BJ (cell line): ENCODE measurements at regions of chr1 and their contacts with region 1.

Region 1: GRCh38 chr1:223087291-223088255 is 55.5 kb downstream of the TLR5 start:
- DNase-seq: no peak
- H3K4me3 ChIP-seq: no peak overlapping the region
- H3K27me3 ChIP-seq: peaks cover 8% of the 10 kb centered on the region
- CTCF ChIP-seq: no peak

Region 2: DNA sequence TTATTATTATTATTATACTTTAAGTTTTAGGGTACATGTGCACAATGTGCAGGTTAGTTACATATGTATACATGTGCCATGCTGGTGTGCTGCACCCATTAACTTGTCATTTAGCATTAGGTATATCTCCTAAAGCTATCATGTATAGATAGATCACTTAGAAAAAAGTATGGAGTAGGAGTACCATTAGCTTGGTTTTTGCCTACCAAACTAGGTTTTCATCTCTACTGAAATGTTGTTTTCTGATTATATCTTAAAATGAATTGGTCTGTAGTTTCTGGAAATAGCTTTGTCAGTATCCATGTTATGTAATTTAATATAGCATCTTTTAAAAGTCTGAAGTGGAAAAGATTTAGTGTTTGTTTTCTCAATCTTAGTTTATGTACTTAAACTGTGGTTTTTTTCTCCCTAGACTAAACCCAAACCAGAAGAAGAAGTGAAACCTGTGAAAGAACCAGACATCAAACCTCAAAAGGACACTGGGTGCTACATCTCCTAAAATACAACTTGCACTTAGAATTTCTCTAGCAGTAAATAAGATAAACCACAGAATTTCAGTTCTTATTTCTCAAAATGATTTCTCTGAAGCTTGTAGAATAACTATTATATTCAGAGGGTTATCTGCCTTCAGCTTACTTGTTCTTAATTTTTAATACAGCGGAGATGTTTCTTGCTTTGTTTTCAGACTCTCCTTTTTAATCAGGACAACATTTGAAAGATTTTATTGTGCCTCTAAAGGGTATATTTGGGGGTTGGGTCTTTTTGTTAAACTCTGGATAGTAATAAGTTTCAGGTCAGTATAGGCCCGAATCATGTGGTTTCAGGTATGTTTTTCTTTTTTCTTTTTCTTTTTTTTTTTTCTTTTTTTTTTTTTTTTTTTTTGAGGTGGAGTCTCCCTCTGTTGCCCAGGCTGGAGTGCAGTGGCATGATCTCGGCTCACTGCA is 355.1 kb before region 1 on chr1:
- CTCF ChIA-PET with region 1: interaction called, 12 read pairs
- POLR2A ChIA-PET with region 1: no interaction called
- DNase-seq: no peak
- H3K4me3 ChIP-seq: no peak overlapping the region
- H3K27me3 ChIP-seq: no peaks in the 10 kb centered on the region
- CTCF ChIP-seq: no peak

Region 3: GRCh38 chr1:222739465-222739864 is 348.1 kb before region 1 on chr1:
- CTCF ChIA-PET with region 1: interaction called, 12 read pairs
- POLR2A ChIA-PET with region 1: no interaction called
- DNase-seq: no peak
- H3K4me3 ChIP-seq: no peak overlapping the region
- H3K27me3 ChIP-seq: no peaks in the 10 kb centered on the region
- CTCF ChIP-seq: no peak

Region 4: GRCh38 chr1:222750651-222751050 is 336.9 kb before region 1 on chr1:
- CTCF ChIA-PET with region 1: interaction called, 11 read pairs
- POLR2A ChIA-PET with region 1: no interaction called
- DNase-seq: no peak
- H3K4me3 ChIP-seq: no peak overlapping the region
- H3K27me3 ChIP-seq: no peaks in the 10 kb centered on the region
- CTCF ChIP-seq: no peak

Region 5: DNA sequence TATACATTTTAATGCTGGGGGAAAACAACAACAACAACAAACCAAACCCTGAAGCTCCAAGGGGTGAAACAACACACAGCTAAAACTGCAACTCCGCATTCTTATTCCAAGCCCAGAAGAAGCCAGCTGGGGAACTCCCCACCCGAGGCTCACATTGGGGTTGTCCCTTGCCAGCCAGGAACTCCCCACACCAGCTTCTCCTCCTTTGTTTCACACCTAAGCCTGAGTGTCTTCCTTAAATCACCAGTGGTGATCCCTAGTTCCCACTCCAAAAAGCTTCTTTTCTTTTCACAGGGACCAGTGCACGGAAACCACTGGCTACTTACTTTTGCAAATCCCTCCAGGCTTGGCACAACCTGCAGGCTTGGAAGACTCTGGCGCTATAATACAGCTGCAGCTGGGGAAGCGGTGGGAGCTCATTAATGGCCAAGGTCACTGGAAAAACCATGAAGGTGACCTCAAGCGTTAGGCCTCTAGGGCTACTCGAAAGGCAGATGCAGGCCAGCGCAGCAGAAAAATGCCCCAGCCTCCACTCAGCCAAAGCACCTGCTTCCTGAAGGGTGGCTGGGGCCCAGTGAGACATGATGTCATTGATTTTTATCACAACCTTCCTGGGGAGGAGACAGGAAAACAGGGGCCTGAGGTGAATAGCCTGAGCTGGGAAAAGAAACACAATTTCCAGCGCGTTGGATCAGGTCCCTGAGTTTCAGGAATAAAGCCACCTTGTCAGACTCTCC is 15.4 kb after region 1 on chr1:
- CTCF ChIA-PET with region 1: interaction called, 23 read pairs
- POLR2A ChIA-PET with region 1: no interaction called
- DNase-seq: no peak
- H3K4me3 ChIP-seq: no peak overlapping the region
- H3K27me3 ChIP-seq: no peaks in the 10 kb centered on the region
- CTCF ChIP-seq: no peak

Region 6: GRCh38 chr1:223123011-223123610 is 35.5 kb after region 1 on chr1:
- CTCF ChIA-PET with region 1: interaction called, 15 read pairs
- POLR2A ChIA-PET with region 1: no interaction called
- DNase-seq: no peak
- H3K4me3 ChIP-seq: no peak overlapping the region
- H3K27me3 ChIP-seq: no peaks in the 10 kb centered on the region
- CTCF ChIP-seq: no peak

Region 7: DNA sequence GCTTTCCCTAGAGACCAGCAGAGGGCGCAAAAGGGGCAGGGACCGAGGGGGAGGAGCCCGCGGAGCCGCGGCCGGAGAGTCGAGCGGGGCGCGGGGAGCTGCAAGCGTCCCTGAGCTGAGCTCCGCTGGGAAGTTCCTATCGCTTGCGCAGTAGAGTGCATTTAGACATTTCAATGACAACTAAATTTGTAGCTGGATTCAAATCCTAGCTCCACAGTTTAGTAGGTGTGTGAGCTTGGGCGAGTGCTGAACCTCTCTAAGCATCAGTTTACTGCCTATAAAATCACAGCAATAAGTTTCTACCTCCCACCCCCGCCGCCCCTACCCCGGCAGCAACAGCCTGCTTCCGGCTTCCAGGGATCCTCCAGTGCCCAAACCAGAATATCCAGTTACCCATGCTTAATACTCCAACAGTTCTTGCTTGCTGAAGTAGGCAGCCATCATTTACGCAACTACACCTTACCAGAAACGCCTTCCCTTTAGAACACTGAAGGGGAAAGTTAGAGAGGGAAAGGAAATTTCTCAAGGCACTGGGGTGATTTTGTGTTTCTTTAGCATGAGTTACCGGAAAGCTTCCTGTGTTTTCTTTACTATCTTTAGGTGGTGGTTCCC is 46.4 kb after region 1 on chr1:
- CTCF ChIA-PET with region 1: interaction called, 11 read pairs
- POLR2A ChIA-PET with region 1: no interaction called
- DNase-seq: no peak
- H3K4me3 ChIP-seq: peak overlapping the region; percentile 13; the same call in 1 of the 2 replicates
- H3K27me3 ChIP-seq: peaks cover 10% of the 10 kb centered on the region
- CTCF ChIP-seq: peak; percentile 98